ENCODE measurements at regions of chr5 and their contacts with region 1.

Region 1: GRCh38 chr5:135729321-135729786 is 105.1 kb upstream of the SLC25A48 start:
- DNase-seq: no peak
- H3K4me3 ChIP-seq: no peak overlapping the region
- H3K27ac ChIP-seq: no peak overlapping the region
- H3K4me1 ChIP-seq: peaks cover 2% of the 10 kb centered on the region
- H3K27me3 ChIP-seq: no peaks in the 10 kb centered on the region
- CTCF ChIP-seq: peak; percentile 59 to 68

Region 2: GRCh38 chr5:135466178-135467050 is 262.9 kb before region 1 on chr5:
- CTCF ChIA-PET with region 1: no interaction called
- dilution Hi-C with region 1: no loop called
- in situ Hi-C with region 1: loop called (anchors 10 kb)
- intact Hi-C with region 1: loop called (anchors 2 kb)
- DNase-seq: peak; percentile 42
- H3K4me3 ChIP-seq: no peak overlapping the region
- H3K27ac ChIP-seq: no peak overlapping the region
- H3K4me1 ChIP-seq: no peaks in the 10 kb centered on the region
- H3K27me3 ChIP-seq: no peaks in the 10 kb centered on the region
- CTCF ChIP-seq: peak; percentile 73 to 97

Region 3: DNA sequence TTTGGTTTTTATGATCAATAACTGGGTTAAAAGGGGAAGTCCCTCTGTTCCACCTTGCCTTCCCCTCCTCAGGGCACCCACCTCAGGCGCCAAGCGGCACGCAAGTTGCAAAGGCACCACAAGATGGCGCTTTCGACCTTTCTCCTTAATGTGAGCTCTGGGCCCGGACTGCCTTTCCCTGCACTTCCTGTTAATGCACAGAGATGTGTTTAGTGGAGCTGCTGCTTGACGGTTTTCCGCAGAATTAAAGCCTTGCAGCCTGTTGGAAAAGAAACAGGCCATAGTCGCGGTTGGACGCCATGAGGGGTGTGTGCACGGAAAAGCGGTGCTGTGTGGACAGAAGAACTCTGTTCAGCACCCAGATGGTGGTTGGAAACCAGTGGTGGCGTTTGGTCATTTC is 168.5 kb before region 1 on chr5:
- CTCF ChIA-PET with region 1: interaction called, 32 read pairs
- dilution Hi-C with region 1: loop called (anchors 25 kb)
- in situ Hi-C with region 1: loop called (anchors 5 kb)
- intact Hi-C with region 1: loop called (anchors 1 kb)
- DNase-seq: peak; percentile 55
- H3K4me3 ChIP-seq: no peak overlapping the region
- H3K27ac ChIP-seq: no peak overlapping the region
- H3K4me1 ChIP-seq: no peaks in the 10 kb centered on the region
- H3K27me3 ChIP-seq: peaks cover under 1% of the 10 kb centered on the region
- CTCF ChIP-seq: peak; percentile 84 to 92

Region 4: GRCh38 chr5:135615581-135616260 is 113.6 kb before region 1 on chr5:
- CTCF ChIA-PET with region 1: no interaction called
- dilution Hi-C with region 1: no loop called
- in situ Hi-C with region 1: no loop called
- intact Hi-C with region 1: no loop called
- DNase-seq: no peak
- H3K4me3 ChIP-seq: no peak overlapping the region
- H3K27ac ChIP-seq: no peak overlapping the region
- H3K4me1 ChIP-seq: no peaks in the 10 kb centered on the region
- H3K27me3 ChIP-seq: no peaks in the 10 kb centered on the region
- CTCF ChIP-seq: no peak

Region 5: GRCh38 chr5:135651150-135651549 is 78.2 kb before region 1 on chr5:
- CTCF ChIA-PET with region 1: interaction called, 5 read pairs
- dilution Hi-C with region 1: no loop called
- in situ Hi-C with region 1: no loop called
- intact Hi-C with region 1: loop called (anchors 2 kb)
- DNase-seq: peak; percentile 100
- H3K4me3 ChIP-seq: no peak overlapping the region
- H3K27ac ChIP-seq: peak overlapping the region; percentile 64
- H3K4me1 ChIP-seq: peaks cover 29% of the 10 kb centered on the region
- H3K27me3 ChIP-seq: no peaks in the 10 kb centered on the region
- CTCF ChIP-seq: no peak

Region 6: GRCh38 chr5:135829681-135830383 is 100.5 kb after region 1 on chr5:
- CTCF ChIA-PET with region 1: no interaction called
- dilution Hi-C with region 1: no loop called
- in situ Hi-C with region 1: loop called in 1 of 2 experiments (anchors 25 kb)
- intact Hi-C with region 1: no loop called
- DNase-seq: peak; percentile 35
- H3K4me3 ChIP-seq: no peak overlapping the region
- H3K27ac ChIP-seq: no peak overlapping the region
- H3K4me1 ChIP-seq: peaks cover 5% of the 10 kb centered on the region
- H3K27me3 ChIP-seq: peaks cover 4% of the 10 kb centered on the region
- CTCF ChIP-seq: peak; percentile 83 to 87

Region 7: GRCh38 chr5:136192526-136193321 is 463.4 kb after region 1 on chr5 and contains the start of gene SMIM32:
- CTCF ChIA-PET with region 1: no interaction called
- dilution Hi-C with region 1: no loop called
- in situ Hi-C with region 1: no loop called
- intact Hi-C with region 1: no loop called
- DNase-seq: no peak
- H3K4me3 ChIP-seq: peak within 1 kb of the TSS in 2 of 3 experiments; percentile 29 to 33
- H3K27ac ChIP-seq: no peak within 1 kb of the TSS
- H3K4me1 ChIP-seq: peaks cover 21% of the 10 kb centered on the region
- H3K27me3 ChIP-seq: peaks cover 6% of the 10 kb centered on the region
- CTCF ChIP-seq: no peak
- total RNA-seq, gene SMIM32: not detected

Measured in mammary epithelial cell (primary cell).